Naive thymus-derived CD4-positive, alpha-beta T cell (primary cell): ENCODE measurements at regions of chr2 and their contacts with region 1.

Region 1: DNA sequence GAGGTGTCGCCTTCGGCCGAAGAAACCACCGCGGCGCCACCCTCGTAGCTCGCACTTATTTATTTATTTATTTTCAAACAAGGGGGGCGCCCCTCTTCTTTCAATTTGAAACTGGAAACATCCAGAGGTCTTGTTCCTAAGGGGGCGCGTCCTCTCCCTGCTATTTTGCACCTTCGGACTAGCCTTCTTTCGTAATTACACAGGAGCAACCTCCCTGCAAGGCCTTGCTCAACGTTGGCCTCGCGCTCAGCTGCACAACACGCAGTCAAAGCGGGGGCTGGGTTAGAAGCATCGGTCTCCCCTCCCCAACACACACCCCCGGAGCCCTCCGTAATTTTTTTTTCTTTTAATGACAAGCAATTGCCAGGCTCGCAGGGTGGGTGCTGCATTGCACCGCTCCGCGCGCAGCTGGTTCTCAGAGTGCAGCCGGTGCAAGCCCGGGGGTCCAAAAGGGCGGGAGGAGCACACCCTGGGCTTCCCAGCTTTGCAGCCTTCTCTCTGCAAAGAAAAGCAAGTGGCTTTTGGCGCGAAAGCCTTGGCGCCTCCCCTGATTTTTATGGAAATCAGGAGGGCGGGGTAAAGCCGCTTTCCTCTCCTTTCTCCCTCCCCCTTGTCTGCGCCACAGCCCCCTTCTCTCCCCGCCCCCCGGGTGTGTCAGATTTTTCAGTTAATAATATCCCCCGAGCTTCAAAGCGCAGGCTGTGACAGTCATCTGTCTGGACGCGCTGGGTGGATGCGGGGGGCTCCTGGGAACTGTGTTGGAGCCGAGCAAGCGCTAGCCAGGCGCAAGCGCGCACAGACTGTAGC is at the start of gene MYCN:
- DNase-seq: peak in 8 of 9 donors; percentile 16 to 50 (median 38)
- ATAC-seq: peak; percentile 12
- H3K4me3 ChIP-seq: peak within 1 kb of the TSS; percentile 52
- H3K4me3 Mint-ChIP-seq: peak within 1 kb of the TSS; percentile 50 to 86 (median 80)
- H3K27ac ChIP-seq: no peak within 1 kb of the TSS
- H3K27ac Mint-ChIP-seq: peak within 1 kb of the TSS in 3 of 9 donors; percentile 23 to 38 (median 36)
- H3K4me1 ChIP-seq: peaks cover 0 to 25% of the 10 kb centered on the region in 2 donors
- H3K4me1 Mint-ChIP-seq: peaks cover 7 to 44% (median 30%) of the 10 kb centered on the region in 7 donors
- H3K27me3 ChIP-seq: peaks cover 0 to 6% of the 10 kb centered on the region in 2 donors
- H3K27me3 Mint-ChIP-seq: peaks cover 41 to 78% (median 58%) of the 10 kb centered on the region in 5 donors
- total RNA-seq, gene MYCN: 0.21 to 2.3 (median 0.47) TPM in 4 of 5 experiments, not detected in the other

Region 2: GRCh38 chr2:15636972-15637785 is 302.9 kb before region 1 on chr2:
- CTCF ChIA-PET with region 1: interaction called, 3 read pairs
- POLR2A ChIA-PET with region 1: no interaction called
- intact Hi-C with region 1: loop called (anchors 1 to 10 kb)
- DNase-seq: peak; percentile 26 to 53 (median 46)
- ATAC-seq: peak; percentile 87
- H3K4me3 ChIP-seq: no peak overlapping the region
- H3K4me3 Mint-ChIP-seq: no peak overlapping the region
- H3K27ac ChIP-seq: no peak overlapping the region
- H3K27ac Mint-ChIP-seq: peak overlapping the region in 7 of 9 donors; percentile 15 to 88 (median 56)
- H3K4me1 ChIP-seq: no peaks in the 10 kb centered on the region
- H3K4me1 Mint-ChIP-seq: peaks cover 0 to 7% (median 4%) of the 10 kb centered on the region in 7 donors
- H3K27me3 ChIP-seq: no peaks in the 10 kb centered on the region
- H3K27me3 Mint-ChIP-seq: no peaks in the 10 kb centered on the region

Region 3: DNA sequence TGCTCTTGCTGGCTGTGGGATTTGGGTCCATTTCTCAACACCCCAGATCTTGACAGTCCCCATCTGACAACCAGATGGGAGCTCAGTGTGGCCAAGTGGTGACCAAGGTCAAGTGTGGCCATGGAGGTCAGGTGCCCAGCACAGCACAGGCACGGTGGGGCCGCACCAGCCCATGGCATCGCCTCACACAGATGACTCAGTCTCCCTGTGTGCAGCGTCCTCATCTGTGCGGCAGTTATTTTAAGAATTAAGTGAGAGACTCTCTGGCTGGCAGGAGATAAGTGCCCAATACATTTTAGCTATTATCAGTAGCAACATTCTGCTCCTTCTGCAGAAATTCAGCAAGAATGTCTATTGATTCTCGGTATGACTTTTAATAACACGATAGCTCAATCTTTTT is 181.2 kb before region 1 on chr2:
- CTCF ChIA-PET with region 1: no interaction called
- POLR2A ChIA-PET with region 1: no interaction called
- intact Hi-C with region 1: no loop called
- DNase-seq: no peak
- ATAC-seq: no peak
- H3K4me3 ChIP-seq: no peak overlapping the region
- H3K4me3 Mint-ChIP-seq: no peak overlapping the region
- H3K27ac ChIP-seq: no peak overlapping the region
- H3K27ac Mint-ChIP-seq: no peak overlapping the region
- H3K4me1 ChIP-seq: no peaks in the 10 kb centered on the region
- H3K4me1 Mint-ChIP-seq: no peaks in the 10 kb centered on the region
- H3K27me3 ChIP-seq: no peaks in the 10 kb centered on the region
- H3K27me3 Mint-ChIP-seq: peaks cover 0 to 32% (median 3%) of the 10 kb centered on the region in 5 donors

Region 4: DNA sequence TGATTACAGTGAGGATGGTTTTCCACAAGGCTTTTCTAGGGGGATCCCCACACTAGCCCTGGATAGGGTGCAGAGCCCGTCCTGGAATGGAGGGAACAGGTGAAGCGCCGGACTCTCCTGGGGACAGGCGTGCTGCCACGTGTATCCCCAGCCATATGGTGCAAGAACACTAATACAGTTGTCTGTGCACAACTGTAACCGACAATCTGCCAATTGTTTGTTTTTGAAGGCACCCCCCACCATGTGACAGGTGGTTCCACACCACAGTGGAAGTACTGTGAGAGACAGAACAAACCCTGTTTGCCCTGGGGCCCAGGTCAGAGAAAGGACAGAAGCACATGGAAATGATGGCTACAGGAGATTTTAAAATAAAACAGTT is 53.2 kb after region 1 on chr2:
- CTCF ChIA-PET with region 1: no interaction called
- POLR2A ChIA-PET with region 1: no interaction called
- intact Hi-C with region 1: no loop called
- DNase-seq: no peak
- ATAC-seq: no peak
- H3K4me3 ChIP-seq: no peak overlapping the region
- H3K4me3 Mint-ChIP-seq: no peak overlapping the region
- H3K27ac ChIP-seq: no peak overlapping the region
- H3K27ac Mint-ChIP-seq: no peak overlapping the region
- H3K4me1 ChIP-seq: no peaks in the 10 kb centered on the region
- H3K4me1 Mint-ChIP-seq: peaks cover 0 to 3% (median 0%) of the 10 kb centered on the region in 7 donors
- H3K27me3 ChIP-seq: no peaks in the 10 kb centered on the region
- H3K27me3 Mint-ChIP-seq: no peaks in the 10 kb centered on the region

Region 5: DNA sequence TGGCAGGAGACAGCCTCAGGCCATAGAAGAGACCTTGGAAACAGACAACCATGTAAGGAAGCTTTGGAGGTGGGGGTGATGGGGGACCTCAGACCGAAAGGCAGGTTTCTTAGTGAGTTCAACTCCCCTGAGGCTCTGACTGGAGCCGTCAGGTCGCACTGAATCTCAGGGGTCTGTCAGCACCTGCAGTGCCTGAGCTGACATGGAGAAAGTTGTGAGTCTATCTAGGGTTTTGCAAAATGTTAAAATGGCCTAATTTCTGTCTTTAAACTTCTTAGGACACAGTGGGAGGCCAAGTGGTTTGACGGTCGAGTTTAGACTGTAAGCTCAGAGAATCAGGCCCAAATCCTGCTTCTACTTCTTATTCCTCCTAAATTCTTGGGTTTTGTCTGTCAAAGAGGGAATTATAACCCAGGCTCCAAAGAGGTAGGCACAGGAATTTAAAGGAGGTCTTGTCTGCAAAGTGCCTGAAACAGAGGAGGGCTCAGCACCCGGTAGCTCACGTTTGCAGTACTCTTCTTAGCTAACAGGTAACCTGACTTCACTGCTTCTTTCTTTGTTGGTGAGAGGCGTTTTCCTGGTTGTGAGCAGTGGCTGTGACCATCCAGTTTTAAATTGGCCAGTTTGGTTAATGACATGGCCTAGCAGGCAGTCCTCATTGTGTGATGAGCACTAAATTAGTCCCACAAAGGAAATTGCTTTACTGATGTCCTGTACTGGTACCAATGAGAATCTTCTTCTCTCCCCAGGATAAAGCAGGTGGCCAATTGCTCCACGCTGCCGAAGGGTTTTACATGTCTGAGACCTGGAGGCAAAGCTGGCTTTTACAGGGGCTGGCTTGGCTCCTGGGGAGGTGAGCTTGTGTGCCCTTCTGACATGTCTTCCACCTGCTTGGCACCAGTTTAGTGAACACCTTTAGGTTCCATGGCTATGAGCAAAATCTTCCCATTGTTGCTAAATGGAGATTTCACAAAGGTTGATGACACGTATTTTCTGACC is 96.0 kb after region 1 on chr2:
- CTCF ChIA-PET with region 1: interaction called, 8 read pairs
- POLR2A ChIA-PET with region 1: no interaction called
- intact Hi-C with region 1: loop called in 1 of 2 experiments (anchors 1 kb)
- DNase-seq: no peak
- ATAC-seq: no peak
- H3K4me3 ChIP-seq: no peak overlapping the region
- H3K4me3 Mint-ChIP-seq: no peak overlapping the region
- H3K27ac ChIP-seq: no peak overlapping the region
- H3K27ac Mint-ChIP-seq: peak overlapping the region in 1 of 9 donors; percentile 53
- H3K4me1 ChIP-seq: no peaks in the 10 kb centered on the region
- H3K4me1 Mint-ChIP-seq: no peaks in the 10 kb centered on the region
- H3K27me3 ChIP-seq: no peaks in the 10 kb centered on the region
- H3K27me3 Mint-ChIP-seq: peaks cover 0 to 5% (median 0%) of the 10 kb centered on the region in 5 donors

Region 6: DNA sequence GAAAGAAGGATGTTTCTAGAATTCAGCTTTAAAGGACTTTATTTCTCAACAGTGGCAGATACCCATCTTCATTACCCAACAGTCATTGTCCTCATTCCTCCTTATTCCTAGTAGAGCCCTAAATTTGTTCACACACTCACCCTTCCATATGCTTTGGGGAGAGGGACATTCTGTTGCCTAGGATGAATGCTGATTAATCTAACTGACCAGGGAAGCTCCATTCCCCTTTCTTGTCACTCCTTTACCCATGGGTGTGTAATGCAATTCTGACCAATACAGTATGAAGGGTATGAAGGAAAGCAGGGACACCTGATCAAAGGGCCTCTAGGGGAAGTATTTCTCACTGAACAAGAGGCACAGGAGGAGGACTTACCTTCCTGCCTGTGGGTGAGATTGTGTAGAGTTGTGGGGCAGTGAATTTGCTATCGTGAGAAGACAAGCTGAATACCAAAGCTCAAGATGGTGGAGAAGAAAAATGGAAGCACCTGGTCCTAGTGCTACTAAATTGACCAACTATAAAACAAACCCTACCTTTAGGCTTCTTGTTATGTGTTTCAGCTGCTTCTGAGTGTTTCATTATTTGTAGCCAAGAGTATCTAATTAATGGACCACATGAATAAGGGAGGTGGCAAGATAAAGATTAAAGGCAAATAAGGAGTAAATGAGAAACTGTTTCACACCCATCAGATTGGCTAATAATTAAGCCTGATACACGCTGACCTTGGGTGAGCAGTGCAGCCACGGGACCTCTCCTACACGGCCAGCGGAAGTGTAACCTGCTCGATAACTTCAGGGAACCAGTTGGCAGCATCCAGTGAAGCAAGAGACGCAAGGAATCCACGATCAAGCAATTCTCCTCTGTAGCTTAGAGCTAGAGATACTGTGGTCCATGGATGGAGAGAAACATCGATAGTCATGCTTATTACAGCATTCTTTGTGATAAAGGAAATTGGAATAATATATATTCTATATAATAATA is 202.6 kb after region 1 on chr2:
- CTCF ChIA-PET with region 1: interaction called, 3 read pairs
- POLR2A ChIA-PET with region 1: no interaction called
- intact Hi-C with region 1: loop called in 1 of 2 experiments (anchors 2 kb)
- DNase-seq: peak in 6 of 9 donors; percentile 16 to 70 (median 56)
- ATAC-seq: peak; percentile 42
- H3K4me3 ChIP-seq: no peak overlapping the region
- H3K4me3 Mint-ChIP-seq: no peak overlapping the region
- H3K27ac ChIP-seq: no peak overlapping the region
- H3K27ac Mint-ChIP-seq: no peak overlapping the region
- H3K4me1 ChIP-seq: no peaks in the 10 kb centered on the region
- H3K4me1 Mint-ChIP-seq: no peaks in the 10 kb centered on the region
- H3K27me3 ChIP-seq: no peaks in the 10 kb centered on the region
- H3K27me3 Mint-ChIP-seq: peaks cover 0 to 6% (median 0%) of the 10 kb centered on the region in 5 donors

Region 7: DNA sequence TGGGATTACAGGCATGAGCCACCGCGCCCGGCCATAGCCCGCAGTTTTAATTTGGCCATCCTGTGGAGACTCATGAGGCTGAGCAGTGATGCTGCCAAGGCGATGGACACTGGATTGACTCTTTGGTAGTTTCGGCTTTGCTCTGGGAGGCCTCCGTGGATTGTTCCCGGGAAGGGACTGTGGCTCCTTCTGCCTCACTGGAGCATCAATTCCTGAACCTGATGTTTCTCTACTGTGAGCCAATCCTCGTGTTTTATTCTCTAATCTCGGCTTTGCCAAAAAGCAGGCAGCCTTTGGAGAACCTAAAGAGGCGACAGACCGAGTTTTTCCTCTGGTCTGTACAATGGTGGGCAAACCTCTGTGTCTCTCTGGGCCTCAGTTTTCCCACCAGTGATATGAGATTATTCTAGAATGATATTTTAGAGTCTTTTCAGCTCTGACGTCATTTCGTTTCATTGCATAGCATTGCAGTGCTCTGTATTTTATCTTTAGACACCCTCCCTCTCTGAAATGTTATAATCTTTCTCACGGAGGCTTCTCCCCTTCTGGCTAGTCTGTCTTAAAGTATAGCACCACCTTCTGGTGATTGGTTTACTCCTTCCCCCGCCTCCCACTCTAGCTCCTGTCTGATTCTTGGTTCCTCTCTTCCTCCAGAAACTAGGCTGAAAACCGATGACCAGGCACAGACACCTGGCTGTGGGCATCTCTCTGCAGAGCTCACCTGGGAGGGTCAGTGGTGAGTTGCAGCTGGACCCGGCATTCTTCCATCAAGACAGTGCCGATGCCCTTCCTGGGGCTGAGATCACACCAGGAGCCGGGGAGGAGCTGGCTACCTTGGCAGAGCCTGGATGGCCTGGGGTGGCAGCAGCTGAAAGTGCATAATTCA is 341.6 kb after region 1 on chr2:
- CTCF ChIA-PET with region 1: interaction called, 12 read pairs
- POLR2A ChIA-PET with region 1: no interaction called
- intact Hi-C with region 1: loop called in 1 of 2 experiments (anchors 1 kb)
- DNase-seq: peak in 4 of 9 donors; percentile 4 to 24 (median 16)
- ATAC-seq: no peak
- H3K4me3 ChIP-seq: no peak overlapping the region
- H3K4me3 Mint-ChIP-seq: no peak overlapping the region
- H3K27ac ChIP-seq: no peak overlapping the region
- H3K27ac Mint-ChIP-seq: no peak overlapping the region
- H3K4me1 ChIP-seq: no peaks in the 10 kb centered on the region
- H3K4me1 Mint-ChIP-seq: peaks cover 0 to 4% (median 0%) of the 10 kb centered on the region in 7 donors
- H3K27me3 ChIP-seq: no peaks in the 10 kb centered on the region
- H3K27me3 Mint-ChIP-seq: peaks cover 0 to 22% (median 0%) of the 10 kb centered on the region in 5 donors

Region 8: DNA sequence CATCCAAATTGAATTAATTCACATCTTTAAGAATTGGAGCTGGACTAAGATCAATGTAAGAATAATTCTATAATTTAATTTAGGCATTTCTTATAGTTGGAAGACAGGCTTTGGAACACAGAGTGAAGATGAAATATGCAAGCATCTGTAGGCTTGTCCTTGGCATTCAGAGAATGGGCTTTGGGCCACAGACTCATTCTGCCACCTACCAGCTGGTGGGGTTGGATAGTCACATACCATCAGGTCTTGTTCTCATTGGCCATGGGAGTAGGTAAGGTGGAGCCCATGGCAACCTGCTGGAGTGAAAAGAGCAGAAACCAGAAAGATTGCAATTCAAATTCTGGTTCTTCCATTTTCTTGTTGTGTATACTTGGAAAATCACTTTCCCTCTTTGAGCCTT is 425.3 kb after region 1 on chr2:
- CTCF ChIA-PET with region 1: no interaction called
- POLR2A ChIA-PET with region 1: no interaction called
- intact Hi-C with region 1: no loop called
- DNase-seq: no peak
- ATAC-seq: no peak
- H3K4me3 ChIP-seq: no peak overlapping the region
- H3K4me3 Mint-ChIP-seq: no peak overlapping the region
- H3K27ac ChIP-seq: no peak overlapping the region
- H3K27ac Mint-ChIP-seq: no peak overlapping the region
- H3K4me1 ChIP-seq: no peaks in the 10 kb centered on the region
- H3K4me1 Mint-ChIP-seq: no peaks in the 10 kb centered on the region
- H3K27me3 ChIP-seq: no peaks in the 10 kb centered on the region
- H3K27me3 Mint-ChIP-seq: peaks cover 0 to 5% (median 0%) of the 10 kb centered on the region in 5 donors